ENCODE measurements at regions of chr11 and their contacts with region 1.

Region 1: DNA sequence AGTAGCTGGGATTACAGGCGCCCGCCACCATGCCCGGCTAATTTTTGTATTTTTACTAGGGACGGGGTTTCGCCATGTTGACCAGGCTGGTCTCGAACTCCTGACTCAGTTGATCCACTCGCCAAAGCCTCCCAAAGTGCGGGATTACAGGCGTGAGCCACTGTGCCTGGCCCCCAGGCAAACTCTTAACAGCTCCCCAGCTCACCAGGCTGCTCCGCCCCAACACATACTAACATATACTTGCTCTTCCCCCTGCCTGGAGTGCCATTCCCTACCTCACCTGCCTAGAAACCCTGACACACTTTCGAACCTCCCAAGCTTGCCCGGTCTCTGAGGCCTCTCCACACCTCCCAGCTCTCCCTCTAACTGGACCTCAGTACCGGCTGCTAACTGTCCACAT is 8.5 kb downstream of the MAP4K2 start:
- DNase-seq: no peak
- ATAC-seq: no peak
- H3K4me3 ChIP-seq: no peak overlapping the region
- H3K27ac ChIP-seq: no peak overlapping the region
- H3K4me1 ChIP-seq: no peaks in the 10 kb centered on the region
- H3K27me3 ChIP-seq: no peaks in the 10 kb centered on the region
- CTCF ChIP-seq: no peak

Region 2: DNA sequence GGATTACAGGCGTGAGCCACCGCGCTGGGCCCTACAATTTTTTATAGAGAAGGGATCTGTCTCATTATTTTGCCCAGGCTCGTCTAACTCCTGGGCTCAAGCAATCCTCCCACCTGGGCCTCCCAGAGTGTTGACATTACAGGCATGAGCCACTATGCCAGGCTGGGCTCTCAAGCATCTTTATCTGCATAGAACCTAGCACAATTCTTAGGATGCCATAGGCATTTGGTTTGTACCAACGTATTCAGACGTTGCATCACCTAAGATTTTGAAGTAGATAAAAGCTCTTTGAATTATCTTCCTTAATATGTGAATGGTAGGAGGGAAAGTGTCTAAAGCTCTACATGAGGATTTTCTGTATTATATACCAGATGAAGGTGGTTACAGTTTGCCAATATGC is 1082.7 kb before region 1 on chr11:
- CTCF ChIA-PET with region 1: interaction called, 12 read pairs
- POLR2A ChIA-PET with region 1: no interaction called
- intact Hi-C with region 1: no loop called
- DNase-seq: no peak
- ATAC-seq: no peak
- H3K4me3 ChIP-seq: no peak overlapping the region
- H3K27ac ChIP-seq: no peak overlapping the region
- H3K4me1 ChIP-seq: peaks cover 14% of the 10 kb centered on the region
- H3K27me3 ChIP-seq: no peaks in the 10 kb centered on the region
- CTCF ChIP-seq: no peak

Region 3: DNA sequence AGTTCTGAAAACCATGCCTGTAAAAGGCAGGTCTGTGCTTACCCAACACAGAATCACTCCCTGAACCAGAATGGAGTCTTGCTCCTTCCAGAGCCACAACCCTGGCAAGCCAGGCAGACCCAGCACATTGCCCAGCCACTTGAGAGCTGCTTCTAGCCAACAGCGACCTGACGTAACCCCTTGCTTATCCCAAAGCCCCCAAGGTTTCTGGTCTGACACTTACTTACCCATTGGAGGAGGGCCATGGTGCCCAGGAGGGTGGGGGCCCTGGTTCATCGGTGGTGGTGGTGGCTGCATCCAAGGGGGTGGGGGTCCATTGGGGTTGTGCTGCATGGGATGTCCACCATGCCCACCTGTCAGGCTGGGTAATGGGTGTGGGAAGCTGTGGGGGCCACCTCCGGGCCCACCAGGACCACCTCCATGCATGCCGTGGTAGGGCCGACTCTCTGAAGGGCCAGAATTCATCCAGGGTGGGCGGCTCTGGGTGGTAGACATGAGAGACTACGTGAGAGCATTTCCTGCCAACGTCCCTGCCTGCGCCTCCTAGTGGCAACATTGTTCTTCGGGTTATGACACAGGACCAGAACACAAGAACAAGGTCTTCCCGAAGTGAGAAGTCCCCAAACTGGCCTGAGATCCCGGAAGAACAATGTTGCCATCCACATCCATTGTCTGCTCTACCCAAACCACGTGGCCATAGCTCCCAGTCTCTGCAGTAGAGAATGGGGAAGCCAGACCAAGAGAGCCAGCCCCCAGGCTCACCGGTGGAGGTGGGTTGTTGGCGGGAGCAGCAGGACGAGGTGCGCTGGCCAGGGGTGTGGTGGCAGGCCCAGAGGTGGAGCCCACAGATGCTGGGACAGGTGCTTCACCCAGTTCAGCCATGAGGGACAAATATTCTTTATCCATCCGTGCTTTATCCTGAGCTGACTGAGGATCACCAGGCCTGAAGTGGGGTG is 26.9 kb before region 1 on chr11:
- CTCF ChIA-PET with region 1: no interaction called
- POLR2A ChIA-PET with region 1: no interaction called
- intact Hi-C with region 1: no loop called
- DNase-seq: peak; percentile 72
- ATAC-seq: peak; percentile 53
- H3K4me3 ChIP-seq: no peak overlapping the region
- H3K27ac ChIP-seq: no peak overlapping the region
- H3K4me1 ChIP-seq: no peaks in the 10 kb centered on the region
- H3K27me3 ChIP-seq: no peaks in the 10 kb centered on the region
- CTCF ChIP-seq: peak; percentile 96

Region 4: DNA sequence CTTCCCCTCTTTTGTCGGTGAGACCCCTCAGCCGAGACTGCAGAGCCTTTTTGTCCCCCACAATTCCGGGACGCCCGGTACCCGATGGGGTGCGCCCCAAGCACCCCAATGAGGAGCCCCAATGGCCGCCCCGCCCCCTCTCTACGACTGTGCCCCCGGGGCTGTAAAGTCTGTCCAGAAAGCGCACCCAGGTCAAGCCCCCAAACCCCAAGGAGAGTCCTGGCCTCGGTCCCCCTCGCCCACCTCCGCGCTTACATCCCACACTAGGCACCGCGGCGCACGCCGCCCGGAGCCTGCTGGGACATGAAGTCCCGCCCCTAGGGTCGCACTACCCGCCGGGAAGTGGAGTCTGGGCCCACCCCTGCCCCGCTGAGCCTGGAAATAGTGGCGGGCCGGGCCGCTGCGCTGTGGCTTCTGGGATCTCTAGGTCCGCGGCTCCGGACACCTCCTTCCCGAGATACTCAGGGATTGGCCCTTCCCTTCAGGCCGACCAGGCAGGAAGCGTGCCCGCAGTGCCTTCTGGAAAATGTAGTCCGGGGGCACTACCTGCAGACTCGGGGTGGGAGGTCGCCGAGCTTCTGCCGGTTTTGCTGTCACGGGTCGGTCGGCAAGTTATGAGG is 15.9 kb after region 1 on chr11 and contains the start of gene MEN1:
- CTCF ChIA-PET with region 1: no interaction called
- POLR2A ChIA-PET with region 1: no interaction called
- intact Hi-C with region 1: no loop called
- DNase-seq: peak; percentile 99
- ATAC-seq: peak; percentile 99
- H3K4me3 ChIP-seq: peak within 1 kb of the TSS; percentile 89
- H3K27ac ChIP-seq: no peak within 1 kb of the TSS; the same call in 1 of the 2 replicates
- H3K4me1 ChIP-seq: peaks cover 10% of the 10 kb centered on the region; the same call in 1 of the 2 replicates
- H3K27me3 ChIP-seq: no peaks in the 10 kb centered on the region
- CTCF ChIP-seq: no peak
- total RNA-seq, gene MEN1: 46.1 and 54.1 TPM in 2 replicates